Breast epithelium (tissue), 4 donors: ENCODE measurements at regions of chr5 and their contacts with region 1.

Region 1: GRCh38 chr5:67561151-67561932 is 364.7 kb upstream of the CD180 start:
- DNase-seq: no peak
- H3K4me3 ChIP-seq: no peak overlapping the region
- H3K27ac ChIP-seq: no peak overlapping the region
- H3K4me1 ChIP-seq: no peaks in the 10 kb centered on the region
- H3K27me3 ChIP-seq: no peaks in the 10 kb centered on the region
- CTCF ChIP-seq: no peak
- POLR2A ChIP-seq: no peak

Region 2: GRCh38 chr5:67543720-67544270 is 17.5 kb before region 1 on chr5:
- intact Hi-C with region 1: loop called (anchors 1 kb)
- DNase-seq: no peak
- H3K4me3 ChIP-seq: no peak overlapping the region
- H3K27ac ChIP-seq: peak overlapping the region in 1 of 2 donors; percentile 7
- H3K4me1 ChIP-seq: no peaks in the 10 kb centered on the region
- H3K27me3 ChIP-seq: no peaks in the 10 kb centered on the region
- CTCF ChIP-seq: no peak
- POLR2A ChIP-seq: no peak